Aorta (tissue), 5 donors: ENCODE measurements at regions of chr14 and their contacts with region 1.

Region 1: GRCh38 chr14:90491221-90491885 is 94.5 kb downstream of the CALM1 start:
- DNase-seq: peak; percentile 92 to 95
- ATAC-seq: peak; percentile 90
- H3K4me3 ChIP-seq: no peak overlapping the region
- H3K27ac ChIP-seq: peak overlapping the region in 1 of 2 donors; percentile 35
- H3K4me1 ChIP-seq: no peaks in the 10 kb centered on the region
- H3K27me3 ChIP-seq: no peaks in the 10 kb centered on the region

Region 2: GRCh38 chr14:90419200-90419599 is 72.2 kb before region 1 on chr14:
- intact Hi-C with region 1: loop called in 1 of 2 experiments (anchors 5 kb)
- DNase-seq: peak; percentile 93 to 95
- ATAC-seq: peak; percentile 88
- H3K4me3 ChIP-seq: no peak overlapping the region
- H3K27ac ChIP-seq: peak overlapping the region in 1 of 2 donors; percentile 4
- H3K4me1 ChIP-seq: no peaks in the 10 kb centered on the region
- H3K27me3 ChIP-seq: no peaks in the 10 kb centered on the region